ENCODE measurements at regions of chr3 and their contacts with region 1.

Region 1: GRCh38 chr3:32467333-32468070 is 35.1 kb downstream of the CMTM6 start:
- DNase-seq: peak; percentile 53 to 80
- ATAC-seq: peak; percentile 88 to 96 (median 90)
- H3K4me3 ChIP-seq: peak overlapping the region in 9 of 10 donors; percentile 14 to 53 (median 46)
- H3K27ac ChIP-seq: peak overlapping the region in 3 of 10 donors; percentile 46 to 79 (median 58)
- H3K4me1 ChIP-seq: peaks cover 0 to 55% (median 18%) of the 10 kb centered on the region in 9 donors
- H3K27me3 ChIP-seq: no peaks in the 10 kb centered on the region
- CTCF ChIP-seq: peak; percentile 95 to 100 (median 99)

Region 2: GRCh38 chr3:32172420-32172819 is 295.1 kb before region 1 on chr3:
- intact Hi-C with region 1: loop called in 7 of 10 experiments (anchors 2 to 10 kb)
- DNase-seq: no peak
- ATAC-seq: no peak
- H3K4me3 ChIP-seq: no peak overlapping the region
- H3K27ac ChIP-seq: no peak overlapping the region
- H3K4me1 ChIP-seq: peaks cover 0 to 6% (median 1%) of the 10 kb centered on the region in 9 donors
- H3K27me3 ChIP-seq: no peaks in the 10 kb centered on the region
- CTCF ChIP-seq: no peak

Region 3: GRCh38 chr3:32226870-32227500 is 240.5 kb before region 1 on chr3:
- intact Hi-C with region 1: no loop called
- DNase-seq: no peak
- ATAC-seq: peak in 2 of 8 donors; percentile 33 to 57
- H3K4me3 ChIP-seq: no peak overlapping the region
- H3K27ac ChIP-seq: no peak overlapping the region
- H3K4me1 ChIP-seq: peaks cover 0 to 9% (median 0%) of the 10 kb centered on the region in 9 donors
- H3K27me3 ChIP-seq: no peaks in the 10 kb centered on the region
- CTCF ChIP-seq: no peak

Region 4: GRCh38 chr3:32296256-32297204 is 171.0 kb before region 1 on chr3:
- intact Hi-C with region 1: loop called in 7 of 10 experiments (anchors 2 to 10 kb)
- DNase-seq: peak; percentile 46 to 56
- ATAC-seq: peak; percentile 70 to 91 (median 82)
- H3K4me3 ChIP-seq: no peak overlapping the region
- H3K27ac ChIP-seq: no peak overlapping the region
- H3K4me1 ChIP-seq: peaks cover 0 to 14% (median 4%) of the 10 kb centered on the region in 9 donors
- H3K27me3 ChIP-seq: no peaks in the 10 kb centered on the region
- CTCF ChIP-seq: peak; percentile 72 to 96 (median 90)

Region 5: GRCh38 chr3:32325957-32326356 is 141.5 kb before region 1 on chr3:
- intact Hi-C with region 1: no loop called
- DNase-seq: no peak
- ATAC-seq: no peak
- H3K4me3 ChIP-seq: no peak overlapping the region
- H3K27ac ChIP-seq: no peak overlapping the region
- H3K4me1 ChIP-seq: peaks cover 0 to 30% (median 7%) of the 10 kb centered on the region in 9 donors
- H3K27me3 ChIP-seq: no peaks in the 10 kb centered on the region
- CTCF ChIP-seq: no peak

Region 6: GRCh38 chr3:32374788-32375595 is 92.5 kb before region 1 on chr3:
- intact Hi-C with region 1: loop called (anchors 1 to 5 kb)
- DNase-seq: peak in 1 of 2 donors; percentile 80
- ATAC-seq: peak in 7 of 8 donors; percentile 44 to 79 (median 69)
- H3K4me3 ChIP-seq: no peak overlapping the region
- H3K27ac ChIP-seq: no peak overlapping the region
- H3K4me1 ChIP-seq: peaks cover 0 to 6% (median 0%) of the 10 kb centered on the region in 9 donors
- H3K27me3 ChIP-seq: no peaks in the 10 kb centered on the region
- CTCF ChIP-seq: peak; percentile 51 to 80 (median 69)

Region 7: DNA sequence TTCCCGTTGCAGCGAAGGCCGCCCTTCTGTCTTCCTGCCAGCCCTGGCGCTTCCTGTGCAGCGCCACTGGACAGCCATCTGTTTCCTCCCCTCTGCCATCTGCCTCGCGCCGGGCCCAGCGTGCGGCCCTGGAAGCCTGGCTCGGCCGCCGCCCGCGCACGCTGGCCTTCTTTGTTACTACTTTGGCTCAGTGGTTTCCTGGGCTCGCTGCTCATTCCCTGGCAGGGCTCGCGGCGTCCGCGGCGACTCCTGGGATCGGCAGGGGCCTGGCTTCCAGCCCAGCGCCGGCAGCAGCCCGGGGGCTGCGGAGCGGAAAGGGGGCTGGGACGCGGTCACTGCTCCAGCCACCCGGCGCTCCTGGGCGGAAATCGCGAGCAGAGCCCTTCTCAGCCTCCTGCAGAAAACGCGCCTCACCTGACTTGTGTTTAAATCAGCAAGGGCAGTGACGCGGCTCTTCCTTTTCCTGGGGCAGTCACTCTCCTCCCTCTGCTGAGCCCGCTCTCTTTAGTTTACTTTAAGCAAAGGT is 65.9 kb before region 1 on chr3:
- intact Hi-C with region 1: loop called in 3 of 10 experiments (anchors 5 kb)
- DNase-seq: peak; percentile 83 to 85
- ATAC-seq: peak; percentile 85 to 93 (median 90)
- H3K4me3 ChIP-seq: peak overlapping the region; percentile 7 to 61 (median 54)
- H3K27ac ChIP-seq: peak overlapping the region; percentile 62 to 95 (median 86)
- H3K4me1 ChIP-seq: peaks cover 4 to 88% (median 34%) of the 10 kb centered on the region in 9 donors
- H3K27me3 ChIP-seq: no peaks in the 10 kb centered on the region
- CTCF ChIP-seq: peak in 2 of 9 donors; percentile 8 to 12